ENCODE measurements at regions of chr22 and their contacts with region 1.

Region 1: GRCh38 chr22:46071451-46072109 is 78.7 kb upstream of the PPARA start:
- DNase-seq: peak; percentile 80 to 92
- H3K4me3 ChIP-seq: peak overlapping the region; percentile 99
- H3K27ac ChIP-seq: peak overlapping the region; percentile 68
- H3K4me1 ChIP-seq: peaks cover 44% of the 10 kb centered on the region
- H3K27me3 ChIP-seq: no peaks in the 10 kb centered on the region
- CTCF ChIP-seq: no peak

Region 2: DNA sequence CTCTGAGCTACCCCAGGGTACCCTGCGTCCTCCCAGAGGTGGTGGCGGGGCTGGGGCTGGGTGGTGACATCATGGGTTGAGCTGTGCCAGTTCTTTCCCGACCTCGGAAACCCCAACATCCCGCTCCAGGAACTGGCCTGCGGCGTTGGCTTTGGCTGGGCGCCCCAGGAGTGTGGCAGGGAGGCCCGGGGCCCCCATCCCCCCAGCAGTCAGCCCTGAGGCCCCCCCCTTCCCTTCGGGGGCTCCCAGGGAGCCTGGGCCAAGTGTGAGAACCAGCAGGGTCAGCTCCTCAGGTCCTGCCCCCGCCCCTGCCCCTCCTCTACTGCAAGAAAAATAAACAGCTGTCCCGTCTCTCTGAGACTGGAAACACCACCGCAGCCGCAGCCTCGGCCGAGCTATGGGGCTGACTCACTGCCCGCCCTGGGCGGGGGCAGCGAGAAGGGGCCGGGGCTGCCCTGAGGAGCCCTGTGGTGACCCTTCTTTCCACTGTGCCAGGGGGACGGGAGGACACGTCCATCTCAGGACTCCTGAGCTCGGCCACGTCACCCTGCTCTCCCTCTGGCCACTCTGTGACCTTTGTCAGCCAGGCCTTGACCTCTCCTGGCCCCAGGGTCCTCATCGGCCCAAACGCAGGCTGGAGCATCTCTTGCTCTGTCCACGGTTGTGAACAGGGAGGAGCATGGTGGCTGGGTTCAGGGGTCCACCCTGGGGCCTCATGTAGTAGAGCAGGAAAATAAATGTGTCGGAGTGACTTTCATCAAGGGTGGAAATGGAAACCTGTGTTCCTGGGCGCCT is 168.0 kb before region 1 on chr22:
- CTCF ChIA-PET with region 1: no interaction called
- POLR2A ChIA-PET with region 1: no interaction called
- intact Hi-C with region 1: no loop called
- DNase-seq: peak; percentile 72 to 87
- H3K4me3 ChIP-seq: peak overlapping the region; percentile 37; the same call in 1 of the 2 replicates
- H3K27ac ChIP-seq: no peak overlapping the region
- H3K4me1 ChIP-seq: peaks cover 23% of the 10 kb centered on the region
- H3K27me3 ChIP-seq: no peaks in the 10 kb centered on the region
- CTCF ChIP-seq: no peak

Region 3: DNA sequence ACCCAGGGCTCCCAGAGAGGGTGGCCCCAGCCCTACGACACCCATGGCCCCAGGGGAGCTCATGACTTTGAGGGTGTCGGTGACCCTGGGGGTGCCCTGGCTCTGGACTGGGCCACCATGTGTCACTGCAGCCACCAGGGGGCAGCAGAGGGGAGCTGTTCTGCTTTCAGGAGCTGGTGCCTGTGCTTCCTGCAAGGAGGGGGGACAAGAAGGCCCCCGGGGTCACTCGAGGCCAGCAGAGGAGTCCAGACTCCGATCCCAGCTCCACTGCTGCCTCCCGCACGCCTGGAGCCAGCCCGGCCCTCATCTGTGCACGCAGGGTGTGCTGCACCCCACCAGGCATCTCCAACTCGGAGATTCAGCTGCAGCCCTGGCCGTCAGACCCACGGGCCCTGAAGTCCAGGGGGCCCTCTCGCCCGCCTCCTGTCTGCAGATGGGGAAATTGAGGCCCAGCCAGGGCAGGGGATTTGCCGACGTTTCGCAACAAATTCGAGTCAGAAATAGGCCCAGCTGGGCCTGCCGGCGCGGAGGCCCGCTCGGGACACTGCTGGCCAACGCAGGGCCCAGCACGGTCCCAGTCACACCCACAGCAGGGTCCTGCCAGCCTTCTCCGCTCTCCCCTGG is 65.1 kb before region 1 on chr22:
- CTCF ChIA-PET with region 1: interaction called, 7 read pairs
- POLR2A ChIA-PET with region 1: interaction called, 3 read pairs
- intact Hi-C with region 1: loop called (anchors 2 kb)
- DNase-seq: peak; percentile 77 to 90
- H3K4me3 ChIP-seq: peak overlapping the region; percentile 61
- H3K27ac ChIP-seq: peak overlapping the region; percentile 73
- H3K4me1 ChIP-seq: peaks cover 26% of the 10 kb centered on the region
- H3K27me3 ChIP-seq: no peaks in the 10 kb centered on the region
- CTCF ChIP-seq: peak; percentile 98

Region 4: DNA sequence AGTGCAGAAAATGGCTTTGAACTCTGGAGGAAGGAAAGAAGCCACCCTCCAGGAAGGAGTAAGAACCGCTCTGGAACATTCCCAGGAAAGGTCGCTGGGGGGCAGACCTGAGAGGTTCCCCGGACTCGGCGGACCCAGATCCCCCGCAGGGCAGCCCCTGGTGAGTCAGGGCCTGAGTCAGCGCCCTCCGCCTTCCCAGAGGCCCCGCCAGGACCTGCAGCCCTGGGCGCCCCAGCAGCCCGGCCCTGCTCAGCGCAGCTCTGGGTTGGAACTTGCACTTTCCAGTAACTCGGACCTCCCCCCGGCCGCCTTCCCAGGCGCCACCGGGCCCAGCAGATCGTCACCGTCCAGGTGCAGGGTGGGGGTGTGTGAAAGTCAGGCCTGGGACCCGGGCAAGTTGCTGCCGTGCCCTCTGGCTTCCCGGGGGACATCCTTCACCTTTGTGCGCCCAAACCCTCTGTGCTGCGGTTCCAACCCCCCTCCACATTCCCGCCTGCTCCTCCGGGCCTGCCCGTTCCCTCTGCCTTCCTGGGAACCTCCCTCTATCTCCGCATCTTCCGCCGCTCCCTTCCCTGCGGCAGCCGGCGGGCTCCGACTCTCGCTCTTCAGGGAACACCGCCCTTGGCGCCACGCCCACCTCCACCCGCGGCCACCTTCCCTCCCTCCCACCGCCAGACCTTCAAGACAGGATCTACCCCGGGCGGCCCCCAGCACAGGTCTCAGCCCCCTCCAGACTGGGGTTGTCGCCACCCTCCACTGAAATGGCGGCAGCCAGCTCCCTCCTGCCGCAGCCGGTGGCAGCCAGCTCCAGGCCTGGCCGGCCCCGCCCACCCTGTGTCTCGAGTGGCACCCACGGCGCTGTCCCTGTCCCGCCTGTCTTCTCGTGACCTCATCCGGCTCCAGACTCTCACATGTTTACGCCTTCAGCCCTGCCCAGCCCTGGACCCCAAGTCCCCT is 57.8 kb before region 1 on chr22:
- CTCF ChIA-PET with region 1: no interaction called
- POLR2A ChIA-PET with region 1: interaction called, 16 read pairs
- intact Hi-C with region 1: loop called (anchors 1 kb)
- DNase-seq: peak; percentile 93 to 97
- H3K4me3 ChIP-seq: peak overlapping the region; percentile 71
- H3K27ac ChIP-seq: peak overlapping the region; percentile 97
- H3K4me1 ChIP-seq: peaks cover 50% of the 10 kb centered on the region
- H3K27me3 ChIP-seq: no peaks in the 10 kb centered on the region
- CTCF ChIP-seq: peak; percentile 83

Region 5: DNA sequence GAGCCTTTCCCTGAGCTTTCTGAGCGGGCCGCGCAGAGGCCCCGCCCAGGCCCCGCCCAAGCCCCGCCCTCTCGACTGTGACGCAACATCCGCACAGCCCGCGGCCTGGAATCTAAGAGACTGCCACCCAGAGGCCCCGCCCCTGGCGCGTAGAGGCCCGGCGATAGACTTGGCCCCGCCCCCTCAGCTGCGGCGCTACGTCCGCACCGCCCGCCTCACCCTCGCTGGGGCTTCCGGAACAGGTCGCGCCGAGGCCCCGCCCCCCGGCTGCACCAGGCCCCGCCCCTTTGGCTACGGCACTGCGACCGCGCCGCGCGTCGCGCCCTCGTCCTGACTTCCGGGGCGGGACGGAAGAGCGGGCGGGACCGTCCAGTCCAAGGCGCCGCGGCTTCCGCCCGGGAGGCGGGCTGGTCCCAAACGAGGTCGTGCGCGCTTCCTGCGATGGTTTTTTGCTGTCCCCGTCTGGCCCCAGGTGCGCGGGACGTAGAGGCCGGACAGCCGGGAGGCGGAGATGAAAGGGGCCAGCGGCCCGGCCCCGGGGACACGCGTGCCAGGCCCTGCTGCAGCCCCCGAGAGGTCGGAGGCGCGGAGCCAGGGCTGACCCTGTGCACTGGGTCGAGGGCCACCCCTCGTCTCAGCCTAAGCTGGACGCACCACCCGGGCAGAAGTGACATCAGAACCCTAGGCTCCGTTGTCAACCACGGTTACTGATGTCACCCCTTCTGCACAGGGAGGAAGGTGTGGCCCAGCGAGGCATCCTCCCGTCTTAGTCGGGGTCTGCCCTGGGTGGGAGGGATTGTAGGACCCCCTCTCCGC is 35.6 kb before region 1 on chr22:
- CTCF ChIA-PET with region 1: no interaction called
- POLR2A ChIA-PET with region 1: interaction called, 7 read pairs
- intact Hi-C with region 1: loop called (anchors 5 kb)
- DNase-seq: peak; percentile 96 to 99
- H3K4me3 ChIP-seq: peak overlapping the region; percentile 99
- H3K27ac ChIP-seq: peak overlapping the region; percentile 34; the same call in 1 of the 2 replicates
- H3K4me1 ChIP-seq: peaks cover 15% of the 10 kb centered on the region
- H3K27me3 ChIP-seq: no peaks in the 10 kb centered on the region
- CTCF ChIP-seq: no peak

Region 6: GRCh38 chr22:46053563-46054090 is 18.0 kb before region 1 on chr22:
- CTCF ChIA-PET with region 1: no interaction called
- POLR2A ChIA-PET with region 1: interaction called, 5 read pairs
- intact Hi-C with region 1: loop called (anchors 2 kb)
- DNase-seq: peak; percentile 47 to 79
- H3K4me3 ChIP-seq: peak overlapping the region; percentile 74
- H3K27ac ChIP-seq: peak overlapping the region; percentile 56
- H3K4me1 ChIP-seq: peaks cover 33% of the 10 kb centered on the region
- H3K27me3 ChIP-seq: no peaks in the 10 kb centered on the region
- CTCF ChIP-seq: no peak

Region 7: DNA sequence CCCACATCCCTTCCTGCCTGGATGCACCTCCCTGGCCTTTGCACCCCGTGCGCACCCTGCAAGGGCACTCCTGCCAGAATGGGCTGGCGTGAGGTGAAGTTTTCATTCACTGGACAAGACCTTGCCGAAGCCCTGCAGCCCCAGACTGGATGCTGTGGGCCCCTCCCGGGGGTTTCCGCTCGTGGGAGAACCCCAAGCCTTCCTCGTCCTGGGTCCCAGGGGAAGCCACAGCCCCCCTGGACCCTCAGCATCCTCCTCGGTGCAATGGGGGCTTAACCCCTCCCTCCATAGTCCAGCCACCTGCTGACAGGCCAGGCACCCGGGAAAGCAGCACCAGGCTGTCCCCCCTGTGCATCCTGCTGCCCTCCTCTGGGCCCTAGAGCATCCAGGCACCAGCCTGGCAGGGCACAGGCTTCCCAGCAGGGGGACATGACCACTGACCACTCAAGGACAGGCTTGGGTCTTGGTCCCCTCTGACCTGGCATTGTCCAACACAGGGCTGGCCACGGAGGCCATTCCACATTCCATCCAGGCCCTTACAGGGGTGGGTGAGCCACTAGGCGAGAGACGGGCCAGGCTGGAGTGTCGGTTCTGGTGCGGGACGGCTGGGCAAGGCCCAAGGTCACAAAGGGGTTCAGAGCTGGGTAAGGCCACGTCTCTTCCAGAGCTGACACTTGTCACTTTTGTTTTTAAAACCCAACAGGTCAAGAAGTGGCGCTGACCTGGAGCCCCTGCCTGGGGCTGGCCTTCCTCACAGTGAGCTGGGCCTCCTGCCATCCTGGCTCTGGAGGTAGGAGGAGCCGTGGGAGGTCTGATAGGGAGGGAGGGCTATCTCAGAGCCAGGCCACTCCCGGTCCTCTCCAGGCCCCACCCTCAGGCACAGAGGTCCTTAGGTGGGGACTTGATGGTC is 37.2 kb after region 1 on chr22:
- CTCF ChIA-PET with region 1: no interaction called
- POLR2A ChIA-PET with region 1: interaction called, 5 read pairs
- intact Hi-C with region 1: loop called (anchors 5 kb)
- DNase-seq: no peak
- H3K4me3 ChIP-seq: no peak overlapping the region
- H3K27ac ChIP-seq: no peak overlapping the region
- H3K4me1 ChIP-seq: peaks cover 5% of the 10 kb centered on the region; the same call in 1 of the 2 replicates
- H3K27me3 ChIP-seq: no peaks in the 10 kb centered on the region
- CTCF ChIP-seq: no peak

Measured in PC-9 (cell line).